A549 (cell line): ENCODE measurements at regions of chr14 and their contacts with region 1.

Region 1: DNA sequence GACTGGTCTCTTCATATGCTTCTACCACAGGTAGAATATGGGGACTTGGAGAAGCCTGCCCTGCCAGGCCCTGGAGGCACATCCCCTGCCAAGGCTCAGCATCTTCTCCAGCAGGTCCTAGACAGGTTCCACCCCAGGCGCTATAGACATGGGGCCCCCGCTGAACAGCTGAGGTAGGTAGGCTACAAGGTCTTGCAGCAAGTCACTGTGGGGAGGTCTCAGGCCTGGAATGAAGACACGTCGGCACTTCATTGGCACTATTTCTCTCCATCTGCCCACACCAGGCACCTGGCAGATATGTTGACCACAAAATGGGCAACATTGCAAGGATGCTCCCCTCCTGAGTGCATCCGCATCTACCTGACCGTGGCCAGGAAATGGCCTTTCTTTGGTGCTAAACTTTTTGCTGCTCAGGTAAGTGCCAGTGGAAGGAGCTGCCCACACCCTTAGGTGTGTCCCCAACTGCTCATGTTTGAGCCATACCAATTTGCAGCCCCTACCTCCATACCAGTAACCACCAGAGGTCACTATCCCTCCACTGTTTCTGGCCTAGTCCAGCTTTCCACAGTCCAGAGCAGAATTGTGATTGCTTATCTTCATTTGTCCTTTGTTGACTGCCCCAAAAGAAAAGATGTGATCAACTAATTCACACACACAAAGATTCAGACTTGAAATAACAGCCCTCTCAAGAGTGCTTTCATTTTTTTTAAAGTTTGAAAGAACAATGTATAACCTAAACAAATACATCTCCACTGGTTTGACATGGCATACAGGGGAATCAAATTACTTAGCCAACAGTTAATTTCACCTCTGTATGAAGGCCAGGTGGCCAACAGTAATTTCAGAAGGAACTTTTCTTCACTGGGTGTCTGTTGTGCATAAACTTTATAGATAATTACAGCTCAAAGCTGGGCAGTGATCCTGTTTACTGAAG is 16.1 kb downstream of the PIGH start:
- DNase-seq: peak; percentile 56 to 81
- ATAC-seq: peak; percentile 93 to 96
- H3K4me3 ChIP-seq: no peak overlapping the region
- H3K27ac ChIP-seq: no peak overlapping the region
- H3K4me1 ChIP-seq: no peaks in the 10 kb centered on the region
- CTCF ChIP-seq: peak; percentile 80
- EP300 ChIP-seq: no peak
- POLR2A ChIP-seq: no peak
- RAD21 ChIP-seq: peak; percentile 80 to 88

Region 2: GRCh38 chr14:67187210-67187609 is 396.8 kb before region 1 on chr14:
- CTCF ChIA-PET with region 1: no interaction called
- POLR2A ChIA-PET with region 1: no interaction called
- DNase-seq: peak; percentile 68 to 72
- ATAC-seq: peak; percentile 91 to 95
- H3K4me3 ChIP-seq: no peak overlapping the region
- H3K27ac ChIP-seq: peak overlapping the region; percentile 16 to 69; a peak in 5 of 6 replicates
- H3K4me1 ChIP-seq: peaks cover 23% of the 10 kb centered on the region
- CTCF ChIP-seq: no peak
- EP300 ChIP-seq: no peak
- POLR2A ChIP-seq: no peak
- RAD21 ChIP-seq: peak in 1 of 2 experiments; percentile 11; a peak in 1 of 5 replicates

Region 3: GRCh38 chr14:67557126-67557525 is 26.9 kb before region 1 on chr14:
- CTCF ChIA-PET with region 1: interaction called, 15 read pairs
- POLR2A ChIA-PET with region 1: no interaction called
- DNase-seq: peak in 1 of 2 experiments; percentile 11
- ATAC-seq: peak; percentile 39 to 57; a peak in 4 of 6 replicates
- H3K4me3 ChIP-seq: no peak overlapping the region
- H3K27ac ChIP-seq: no peak overlapping the region; a peak in 1 of 6 replicates
- H3K4me1 ChIP-seq: peaks cover 9% of the 10 kb centered on the region; the same call in 1 of the 3 replicates
- CTCF ChIP-seq: no peak
- EP300 ChIP-seq: no peak
- POLR2A ChIP-seq: no peak
- RAD21 ChIP-seq: no peak

Region 4: DNA sequence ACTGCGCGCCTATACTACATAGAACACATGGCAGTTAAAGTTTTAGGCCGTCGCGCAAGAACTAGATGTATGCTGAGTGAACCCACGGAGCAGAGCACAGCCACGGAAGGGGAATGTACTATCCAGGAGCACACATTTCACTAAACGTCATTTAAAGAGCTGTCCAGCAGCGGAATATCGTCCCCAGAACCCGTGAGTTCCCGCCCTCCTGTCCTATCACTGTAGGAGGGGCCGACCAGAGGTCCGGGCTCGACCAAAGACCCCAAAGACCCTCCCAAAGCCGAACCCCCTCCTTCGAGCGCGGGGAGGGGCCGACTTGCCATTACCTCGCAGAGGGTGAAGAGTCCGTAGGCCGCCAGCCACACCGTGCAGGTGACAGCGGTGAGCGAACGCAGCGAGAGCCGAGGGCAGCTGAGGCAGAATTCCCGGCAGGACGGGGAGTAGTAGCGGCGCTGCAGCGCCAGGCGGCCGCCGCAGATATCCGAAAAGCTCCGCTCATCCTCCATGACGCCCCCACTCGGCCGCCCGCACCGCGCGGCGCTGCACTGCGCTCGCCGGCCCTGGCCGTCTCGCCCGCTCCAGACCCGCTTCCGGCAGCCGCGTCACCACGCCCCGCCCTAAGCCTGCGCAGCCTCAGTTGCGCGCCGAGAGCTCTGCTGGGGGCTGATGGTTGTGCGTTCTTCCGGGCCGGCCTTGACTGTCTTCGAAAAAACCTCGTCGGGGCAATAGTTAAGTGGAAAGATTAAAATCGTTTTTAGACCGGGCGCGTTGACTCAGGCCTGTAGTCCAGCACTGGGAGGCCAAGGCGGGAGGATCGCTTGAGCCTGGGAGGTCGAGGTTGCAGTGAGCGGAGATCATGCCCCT is 16.0 kb after region 1 on chr14 and contains the start of gene PIGH:
- CTCF ChIA-PET with region 1: interaction called, 25 read pairs
- POLR2A ChIA-PET with region 1: interaction called, 5 read pairs
- DNase-seq: peak; percentile 87 to 91
- ATAC-seq: peak; percentile 98 to 99
- H3K4me3 ChIP-seq: peak within 1 kb of the TSS; percentile 86
- H3K27ac ChIP-seq: peak within 1 kb of the TSS; percentile 86 to 89
- H3K4me1 ChIP-seq: peaks cover 11% of the 10 kb centered on the region; the same call in 2 of the 3 replicates
- CTCF ChIP-seq: peak; percentile 56
- EP300 ChIP-seq: no peak
- POLR2A ChIP-seq: peak; percentile 71
- RAD21 ChIP-seq: no peak; a peak in 1 of 5 replicates
- polyA plus RNA-seq, gene PIGH: 37.2 and 46.2 TPM in 2 replicates

Region 5: GRCh38 chr14:67619446-67620216 is 35.7 kb after region 1 on chr14 and contains the start of gene ARG2:
- CTCF ChIA-PET with region 1: interaction called, 16 read pairs
- POLR2A ChIA-PET with region 1: no interaction called
- DNase-seq: peak; percentile 91 to 96
- ATAC-seq: peak; percentile 91 to 94
- H3K4me3 ChIP-seq: peak within 1 kb of the TSS; percentile 52
- H3K27ac ChIP-seq: peak within 1 kb of the TSS; percentile 31 to 46; a peak in 4 of 6 replicates
- H3K4me1 ChIP-seq: peaks cover 23% of the 10 kb centered on the region
- CTCF ChIP-seq: no peak
- EP300 ChIP-seq: no peak
- POLR2A ChIP-seq: no peak
- RAD21 ChIP-seq: no peak
- polyA plus RNA-seq, gene ARG2: 2.5 TPM in 2 replicates

Region 6: GRCh38 chr14:67641902-67642749 is 58.1 kb after region 1 on chr14:
- CTCF ChIA-PET with region 1: no interaction called
- POLR2A ChIA-PET with region 1: no interaction called
- DNase-seq: no peak
- ATAC-seq: no peak
- H3K4me3 ChIP-seq: no peak overlapping the region
- H3K27ac ChIP-seq: no peak overlapping the region
- H3K4me1 ChIP-seq: no peaks in the 10 kb centered on the region
- CTCF ChIP-seq: no peak
- EP300 ChIP-seq: no peak
- POLR2A ChIP-seq: no peak
- RAD21 ChIP-seq: no peak

Region 7: DNA sequence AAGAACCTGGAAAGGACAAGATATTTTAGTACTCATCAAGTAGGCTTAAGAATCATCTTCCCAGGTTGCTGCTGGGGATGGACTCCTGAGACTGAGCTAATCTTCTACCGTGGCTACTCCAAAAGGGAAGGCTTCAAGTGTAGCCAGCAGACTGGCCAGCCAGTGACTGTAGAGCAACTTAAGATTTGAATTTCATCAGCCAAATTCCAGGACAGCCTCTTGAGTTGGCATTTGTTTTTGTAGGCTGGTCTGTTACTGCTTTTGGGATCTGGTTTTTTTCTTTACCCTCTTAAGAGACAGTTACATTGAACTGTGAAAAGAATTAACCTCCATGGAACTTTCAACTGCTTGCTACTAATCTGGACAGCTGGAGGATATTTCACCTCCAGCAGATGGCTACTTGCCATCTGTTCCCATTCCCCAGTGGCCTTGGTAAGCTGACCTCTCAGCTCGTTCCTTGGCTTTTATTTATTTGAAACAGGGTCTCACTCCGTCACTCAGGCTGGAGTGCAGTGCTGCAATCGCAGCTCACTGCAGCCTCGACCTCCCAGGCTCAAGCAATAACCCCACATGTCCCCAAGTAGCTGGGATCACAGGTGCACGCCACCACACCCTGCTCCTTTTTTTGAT is 69.8 kb after region 1 on chr14:
- CTCF ChIA-PET with region 1: interaction called, 243 read pairs
- POLR2A ChIA-PET with region 1: no interaction called
- DNase-seq: no peak
- ATAC-seq: no peak
- H3K4me3 ChIP-seq: no peak overlapping the region
- H3K27ac ChIP-seq: peak overlapping the region in 1 of 2 experiments; percentile 11; a peak in 1 of 6 replicates
- H3K4me1 ChIP-seq: peaks cover 5% of the 10 kb centered on the region; the same call in 1 of the 3 replicates
- CTCF ChIP-seq: no peak
- EP300 ChIP-seq: no peak
- POLR2A ChIP-seq: no peak
- RAD21 ChIP-seq: no peak

Region 8: DNA sequence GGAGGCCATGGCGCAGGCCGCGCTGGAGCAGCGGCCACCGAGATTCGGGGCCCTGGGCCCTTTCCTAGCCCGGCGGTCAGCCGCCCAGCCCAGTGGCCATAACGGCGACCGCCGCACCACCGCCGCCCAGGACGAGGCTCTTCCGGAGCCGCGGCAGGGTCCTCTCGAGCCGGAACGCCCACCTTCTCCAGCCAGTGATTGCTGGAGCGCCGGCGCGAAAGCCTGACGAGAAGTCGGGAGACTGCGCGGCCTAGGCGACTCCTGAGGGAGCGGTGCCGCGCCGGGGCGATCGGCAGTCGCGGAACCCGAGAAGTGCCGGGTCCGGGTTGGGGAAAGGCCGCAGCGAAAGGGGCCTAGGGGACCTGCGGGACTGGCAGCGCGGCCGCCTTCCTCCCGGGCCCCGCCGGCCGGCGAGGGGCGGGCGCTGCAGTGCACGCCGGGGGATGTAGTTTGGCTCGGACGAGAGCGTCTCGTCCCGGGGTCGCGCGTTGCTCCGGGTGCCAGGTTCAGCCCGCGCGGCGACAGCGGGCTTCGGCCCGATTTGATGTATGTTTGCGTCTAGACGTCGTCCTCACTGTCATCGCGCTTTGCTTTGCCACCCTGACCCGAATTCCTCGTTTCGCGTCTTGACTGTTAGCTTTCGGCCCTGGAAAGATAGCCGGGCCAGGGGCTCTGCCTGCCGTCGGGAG is 90.6 kb after region 1 on chr14 and contains the start of gene VTI1B:
- CTCF ChIA-PET with region 1: interaction called, 243 read pairs
- POLR2A ChIA-PET with region 1: no interaction called
- DNase-seq: peak; percentile 74 to 81
- ATAC-seq: peak; percentile 96
- H3K4me3 ChIP-seq: peak within 1 kb of the TSS; percentile 97
- H3K27ac ChIP-seq: peak within 1 kb of the TSS; percentile 96 to 99
- H3K4me1 ChIP-seq: peaks cover 26% of the 10 kb centered on the region; the same call in 2 of the 3 replicates
- CTCF ChIP-seq: peak; percentile 24; the same call in 1 of the 3 replicates
- EP300 ChIP-seq: no peak
- POLR2A ChIP-seq: peak; percentile 58
- RAD21 ChIP-seq: no peak; a peak in 1 of 5 replicates
- polyA plus RNA-seq, gene VTI1B: 77.2 and 102 TPM in 2 replicates

Region 9: DNA sequence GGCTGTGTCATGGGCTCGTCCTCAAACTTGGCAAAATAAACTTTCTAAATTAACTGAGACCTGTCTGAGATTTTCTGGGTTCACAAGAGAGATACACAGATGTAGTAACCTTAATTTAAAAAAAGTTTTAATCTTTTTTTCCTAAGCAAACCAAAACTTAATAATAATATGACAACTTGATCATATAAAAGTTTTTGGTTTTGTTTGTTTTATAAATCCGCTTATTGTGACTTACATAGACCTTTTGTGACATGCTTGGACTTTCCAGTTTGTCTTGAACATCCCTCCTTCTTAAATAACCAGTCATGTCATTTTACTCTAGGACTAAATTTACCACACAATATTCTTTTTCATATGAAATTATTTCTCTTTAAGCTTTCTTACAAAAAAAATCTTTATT is 126.2 kb after region 1 on chr14:
- CTCF ChIA-PET with region 1: interaction called, 267 read pairs
- POLR2A ChIA-PET with region 1: no interaction called
- DNase-seq: peak in 1 of 2 experiments; percentile 51
- ATAC-seq: no peak
- H3K4me3 ChIP-seq: no peak overlapping the region
- H3K27ac ChIP-seq: no peak overlapping the region
- H3K4me1 ChIP-seq: peaks cover 5% of the 10 kb centered on the region
- CTCF ChIP-seq: no peak
- EP300 ChIP-seq: no peak
- POLR2A ChIP-seq: no peak
- RAD21 ChIP-seq: no peak

Region 10: DNA sequence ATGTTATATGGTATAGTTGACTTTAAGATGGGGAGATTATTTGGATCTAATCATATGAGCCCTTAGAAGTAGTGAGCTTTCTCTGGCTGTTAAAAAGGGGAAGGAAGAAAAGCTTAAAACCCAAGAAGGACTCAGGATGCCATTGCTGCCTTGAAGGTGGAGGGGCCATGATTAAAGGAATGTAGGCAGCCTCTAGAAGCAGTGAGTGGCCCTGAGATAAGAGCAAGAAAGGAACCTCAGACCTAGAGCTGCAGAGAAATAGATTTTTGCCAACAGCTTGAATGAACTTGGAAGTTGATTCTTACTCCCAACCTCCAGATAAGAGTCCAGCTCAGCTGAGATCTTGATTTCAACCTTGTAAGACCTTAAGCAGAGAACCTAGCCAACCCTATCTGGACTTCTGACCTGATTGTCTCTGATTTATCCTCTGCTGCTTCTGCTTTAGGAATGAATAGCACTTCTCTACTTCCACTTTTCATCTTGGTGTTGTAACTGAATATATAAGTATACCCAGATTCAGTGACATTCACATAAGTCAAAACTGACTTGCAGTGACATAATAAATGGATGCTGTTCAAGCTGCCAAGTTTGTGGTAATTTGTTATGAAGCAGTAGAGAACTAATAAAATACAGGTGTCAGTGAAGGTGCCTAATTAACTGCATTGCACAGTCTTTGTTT is 269.1 kb after region 1 on chr14:
- CTCF ChIA-PET with region 1: no interaction called
- POLR2A ChIA-PET with region 1: no interaction called
- DNase-seq: no peak
- ATAC-seq: no peak
- H3K4me3 ChIP-seq: no peak overlapping the region
- H3K27ac ChIP-seq: no peak overlapping the region
- H3K4me1 ChIP-seq: no peaks in the 10 kb centered on the region
- CTCF ChIP-seq: no peak
- EP300 ChIP-seq: no peak
- POLR2A ChIP-seq: no peak
- RAD21 ChIP-seq: no peak